ENCODE measurements at regions of chr2 and their contacts with region 1.

Region 1: GRCh38 chr2:7825591-7826312 is 856.1 kb upstream of the ID2 start:
- DNase-seq: peak; percentile 55
- H3K4me3 Mint-ChIP-seq: peak overlapping the region; percentile 23
- H3K27ac Mint-ChIP-seq: peak overlapping the region; percentile 97
- H3K4me1 Mint-ChIP-seq: peaks cover 41% of the 10 kb centered on the region
- H3K27me3 Mint-ChIP-seq: peaks cover 4% of the 10 kb centered on the region

Region 2: GRCh38 chr2:7450188-7450832 is 375.4 kb before region 1 on chr2:
- intact Hi-C with region 1: loop called (anchors 1 kb)
- DNase-seq: peak; percentile 65
- H3K4me3 Mint-ChIP-seq: peak overlapping the region; percentile 9
- H3K27ac Mint-ChIP-seq: peak overlapping the region; percentile 98
- H3K4me1 Mint-ChIP-seq: peaks cover 90% of the 10 kb centered on the region
- H3K27me3 Mint-ChIP-seq: no peaks in the 10 kb centered on the region

Region 3: GRCh38 chr2:7672027-7672684 is 153.6 kb before region 1 on chr2:
- intact Hi-C with region 1: loop called (anchors 1 kb)
- DNase-seq: peak; percentile 43
- H3K4me3 Mint-ChIP-seq: peak overlapping the region; percentile 71
- H3K27ac Mint-ChIP-seq: peak overlapping the region; percentile 93
- H3K4me1 Mint-ChIP-seq: peaks cover 79% of the 10 kb centered on the region
- H3K27me3 Mint-ChIP-seq: no peaks in the 10 kb centered on the region

Region 4: GRCh38 chr2:7845332-7845731 is 19.6 kb after region 1 on chr2:
- intact Hi-C with region 1: loop called (anchors 1 kb)
- DNase-seq: no peak
- H3K4me3 Mint-ChIP-seq: no peak overlapping the region
- H3K27ac Mint-ChIP-seq: no peak overlapping the region
- H3K4me1 Mint-ChIP-seq: peaks cover 57% of the 10 kb centered on the region
- H3K27me3 Mint-ChIP-seq: no peaks in the 10 kb centered on the region

Region 5: GRCh38 chr2:8152392-8153257 is 326.9 kb after region 1 on chr2:
- intact Hi-C with region 1: loop called (anchors 1 kb)
- DNase-seq: no peak
- H3K4me3 Mint-ChIP-seq: no peak overlapping the region
- H3K27ac Mint-ChIP-seq: peak overlapping the region; percentile 62
- H3K4me1 Mint-ChIP-seq: peaks cover 38% of the 10 kb centered on the region
- H3K27me3 Mint-ChIP-seq: no peaks in the 10 kb centered on the region

Region 6: GRCh38 chr2:8514796-8515758 is 689.3 kb after region 1 on chr2:
- intact Hi-C with region 1: loop called (anchors 1 kb)
- DNase-seq: peak; percentile 58
- H3K4me3 Mint-ChIP-seq: peak overlapping the region; percentile 35
- H3K27ac Mint-ChIP-seq: peak overlapping the region; percentile 95
- H3K4me1 Mint-ChIP-seq: peaks cover 68% of the 10 kb centered on the region
- H3K27me3 Mint-ChIP-seq: no peaks in the 10 kb centered on the region